ENCODE measurements at regions of chr9 and their contacts with region 1.

Region 1: GRCh38 chr9:72254901-72255535 is 105.8 kb downstream of the GDA start:
- DNase-seq: peak in 1 of 10 donors; percentile 12
- H3K4me3 ChIP-seq: no peak overlapping the region
- H3K27ac ChIP-seq: peak overlapping the region in 3 of 59 donors; percentile 5 to 29 (median 8)
- H3K27me3 ChIP-seq: peaks cover 0 to 8% (median 0%) of the 10 kb centered on the region in 45 donors
- CTCF ChIP-seq: peak in 1 of 56 donors; percentile 10

Region 2: GRCh38 chr9:72185561-72185960 is 69.5 kb before region 1 on chr9:
- intact Hi-C with region 1: loop called in 1 of 2 experiments (anchors 5 kb)
- DNase-seq: peak in 1 of 10 donors; percentile 36
- H3K4me3 ChIP-seq: no peak overlapping the region
- H3K27ac ChIP-seq: peak overlapping the region in 32 of 59 donors; percentile 3 to 76 (median 46)
- H3K27me3 ChIP-seq: no peaks in the 10 kb centered on the region
- CTCF ChIP-seq: peak in 1 of 56 donors; percentile 8